CD14-positive monocyte (primary cell): ENCODE measurements at regions of chr4 and their contacts with region 1.

Region 1: DNA sequence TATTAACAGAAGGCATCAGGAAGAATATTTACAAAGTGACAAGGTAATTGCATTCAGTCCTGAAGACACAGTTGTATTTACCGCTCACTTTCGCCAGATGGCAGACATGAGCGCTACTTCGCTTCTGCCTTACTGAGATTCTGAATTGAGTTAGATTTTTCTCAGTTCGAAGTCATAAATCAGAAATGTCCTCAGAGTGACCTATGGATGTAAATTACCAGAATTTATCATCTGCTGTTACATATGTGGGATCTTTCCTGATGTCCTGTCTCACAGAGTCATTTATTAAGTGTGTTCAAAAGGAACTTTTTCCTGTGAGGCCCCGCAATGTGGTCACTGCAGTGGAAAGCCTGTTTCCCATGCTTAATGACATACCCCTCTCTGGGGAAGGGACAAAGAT is 97.3 kb upstream of the DCLK2 start:
- DNase-seq: peak; percentile 3 to 29 (median 16)
- H3K4me3 ChIP-seq: no peak overlapping the region
- H3K4me3 Mint-ChIP-seq: no peak overlapping the region
- H3K27ac ChIP-seq: no peak overlapping the region
- H3K27ac Mint-ChIP-seq: no peak overlapping the region
- H3K4me1 ChIP-seq: no peaks in the 10 kb centered on the region
- H3K4me1 Mint-ChIP-seq: no peaks in the 10 kb centered on the region
- H3K27me3 ChIP-seq: no peaks in the 10 kb centered on the region
- H3K27me3 Mint-ChIP-seq: peaks cover 2 to 3% (median 2%) of the 10 kb centered on the region in 3 donors
- CTCF ChIP-seq: peak; percentile 84

Region 2: DNA sequence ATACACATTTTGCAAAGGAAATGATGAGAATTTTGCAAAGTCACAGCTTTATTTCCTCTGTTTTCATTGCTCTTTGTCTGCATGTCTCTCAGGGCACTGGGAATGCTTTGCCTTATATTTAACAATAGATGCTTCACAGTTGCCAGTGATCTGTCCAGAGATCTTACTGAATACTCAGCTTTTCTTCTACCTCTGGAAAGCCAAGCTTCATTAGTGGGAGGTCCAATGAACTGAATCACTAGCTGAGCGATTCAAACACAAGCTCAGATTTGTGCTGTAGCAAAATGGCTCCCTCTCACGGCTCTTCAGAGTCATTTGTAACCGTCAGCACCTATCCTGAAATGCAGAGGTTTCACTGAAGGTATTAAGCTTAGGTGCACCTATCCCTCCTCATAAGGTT is 236.3 kb after region 1 on chr4:
- intact Hi-C with region 1: loop called in 1 of 2 experiments (anchors 10 kb)
- DNase-seq: no peak
- H3K4me3 ChIP-seq: no peak overlapping the region
- H3K4me3 Mint-ChIP-seq: no peak overlapping the region
- H3K27ac ChIP-seq: no peak overlapping the region
- H3K27ac Mint-ChIP-seq: no peak overlapping the region
- H3K4me1 ChIP-seq: no peaks in the 10 kb centered on the region
- H3K4me1 Mint-ChIP-seq: no peaks in the 10 kb centered on the region
- H3K27me3 ChIP-seq: no peaks in the 10 kb centered on the region
- H3K27me3 Mint-ChIP-seq: peaks cover 0 to 2% (median 0%) of the 10 kb centered on the region in 3 donors
- CTCF ChIP-seq: no peak

Region 3: GRCh38 chr4:150242820-150243458 is 262.0 kb after region 1 on chr4:
- intact Hi-C with region 1: loop called in 1 of 2 experiments (anchors 10 kb)
- DNase-seq: peak in 2 of 3 donors; percentile 3 to 15
- H3K4me3 ChIP-seq: no peak overlapping the region
- H3K4me3 Mint-ChIP-seq: no peak overlapping the region
- H3K27ac ChIP-seq: no peak overlapping the region
- H3K27ac Mint-ChIP-seq: no peak overlapping the region
- H3K4me1 ChIP-seq: no peaks in the 10 kb centered on the region
- H3K4me1 Mint-ChIP-seq: no peaks in the 10 kb centered on the region
- H3K27me3 ChIP-seq: no peaks in the 10 kb centered on the region
- H3K27me3 Mint-ChIP-seq: peaks cover 0 to 1% (median 0%) of the 10 kb centered on the region in 3 donors
- CTCF ChIP-seq: peak; percentile 93